GM13976 (cell line): ENCODE measurements at regions of chr1 and their contacts with region 1.

Region 1: GRCh38 chr1:23743287-23744052 is at the start of gene ELOA:
- DNase-seq: peak; percentile 95
- CTCF ChIP-seq: no peak

Region 2: DNA sequence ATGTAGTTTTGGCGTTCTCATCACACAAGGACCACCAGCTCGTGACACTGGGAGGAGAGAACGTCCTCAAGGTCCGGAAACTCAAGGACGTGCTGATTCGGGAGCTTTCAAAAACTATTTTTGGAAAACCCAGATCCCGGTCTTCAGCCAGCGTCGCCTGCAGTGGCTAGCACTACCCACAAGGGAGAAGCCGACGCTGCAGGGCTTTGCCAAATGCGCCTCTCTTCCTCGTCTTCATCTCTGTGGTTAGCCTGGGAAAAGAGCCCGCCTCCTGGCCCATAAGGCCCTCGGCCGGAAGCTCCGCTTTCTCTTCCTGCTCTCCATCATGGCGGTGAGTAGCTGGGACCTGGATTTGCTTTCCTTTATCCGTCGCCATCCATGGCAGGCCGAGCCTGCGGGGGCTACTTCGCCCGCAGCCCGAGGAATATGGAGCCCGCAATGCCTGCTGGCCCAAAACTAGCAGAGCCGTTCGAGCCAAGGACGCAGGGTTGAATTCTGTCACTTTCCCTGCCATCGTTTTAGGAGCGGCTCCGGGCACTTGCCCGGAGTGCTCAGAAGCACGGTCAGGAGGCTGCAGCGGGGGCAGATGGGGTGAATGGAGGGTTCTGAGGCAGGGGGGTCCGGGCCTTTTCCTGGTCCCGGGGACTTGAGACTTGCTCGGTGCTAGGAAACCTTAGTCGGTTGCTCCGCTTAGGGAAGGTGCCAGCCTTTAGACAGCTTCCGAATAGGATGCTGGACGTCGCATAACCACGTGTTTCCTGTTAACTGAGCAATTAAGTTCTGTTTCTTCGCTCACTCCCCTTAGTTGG is 51.8 kb before region 1 on chr1 and contains the start of gene RPL11:
- in situ Hi-C with region 1: loop called (anchors 10 kb)
- DNase-seq: peak; percentile 94
- CTCF ChIP-seq: peak; percentile 62